Activated CD4-positive, alpha-beta T cell treated with anti-CD3 and anti-CD28 coated beads, Interleukin-2, amount 10 ng/mL, durations not matched to agents 24 days and 14 days (primary cell): ENCODE measurements at regions of chr11 and their contacts with region 1.

Region 1: GRCh38 chr11:120952461-120953434 is 71.2 kb upstream of the TBCEL start:
- DNase-seq: peak; percentile 86
- H3K4me3 Mint-ChIP-seq: peak overlapping the region; percentile 54
- H3K27ac Mint-ChIP-seq: no peak overlapping the region
- H3K4me1 Mint-ChIP-seq: peaks cover 7% of the 10 kb centered on the region
- H3K27me3 Mint-ChIP-seq: peaks cover 7% of the 10 kb centered on the region

Region 2: DNA sequence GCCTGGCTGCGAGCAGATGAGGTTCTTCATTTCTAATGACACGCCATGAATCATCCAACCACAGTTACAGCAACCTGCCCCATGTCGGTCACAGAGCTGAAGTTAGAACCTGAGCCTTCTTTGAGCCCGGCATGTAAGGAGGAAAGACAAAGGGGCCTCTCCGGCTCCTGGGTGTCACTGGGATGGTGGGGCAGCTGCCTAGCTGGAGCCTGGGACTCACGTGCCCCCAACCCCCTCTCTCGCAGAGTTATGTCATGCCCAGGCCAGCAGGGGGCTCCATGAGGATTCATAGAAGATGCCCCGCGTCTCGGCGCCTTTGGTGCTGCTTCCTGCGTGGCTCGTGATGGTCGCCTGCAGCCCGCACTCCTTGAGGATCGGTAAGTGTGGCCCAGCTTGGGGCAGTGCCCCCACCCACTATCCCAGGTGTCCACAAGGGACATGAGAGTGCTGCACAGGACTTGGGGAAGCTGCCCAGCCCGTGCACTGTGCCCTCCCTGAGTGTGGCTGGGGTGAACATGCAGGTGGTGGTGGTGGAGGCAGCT is 292.7 kb before region 1 on chr11:
- intact Hi-C with region 1: loop called (anchors 10 kb)
- DNase-seq: peak; percentile 67
- H3K4me3 Mint-ChIP-seq: no peak overlapping the region
- H3K27ac Mint-ChIP-seq: no peak overlapping the region
- H3K4me1 Mint-ChIP-seq: no peaks in the 10 kb centered on the region
- H3K27me3 Mint-ChIP-seq: peaks cover 8% of the 10 kb centered on the region

Region 3: GRCh38 chr11:120835601-120836228 is 117.0 kb before region 1 on chr11:
- intact Hi-C with region 1: loop called (anchors 10 kb)
- DNase-seq: peak; percentile 65
- H3K4me3 Mint-ChIP-seq: no peak overlapping the region
- H3K27ac Mint-ChIP-seq: peak overlapping the region; percentile 18
- H3K4me1 Mint-ChIP-seq: peaks cover 10% of the 10 kb centered on the region
- H3K27me3 Mint-ChIP-seq: peaks cover 7% of the 10 kb centered on the region